ENCODE measurements at regions of chr9 and their contacts with region 1.

Region 1: GRCh38 chr9:15422372-15423230 is at the start of gene SNAPC3:
- DNase-seq: peak; percentile 94
- H3K4me3 Mint-ChIP-seq: peak within 1 kb of the TSS; percentile 96
- H3K27ac Mint-ChIP-seq: peak within 1 kb of the TSS; percentile 92
- H3K4me1 Mint-ChIP-seq: peaks cover 50% of the 10 kb centered on the region
- H3K27me3 Mint-ChIP-seq: peaks cover 3% of the 10 kb centered on the region
- total RNA-seq, gene SNAPC3: 27.1 and 30.5 TPM in 2 replicates

Region 2: GRCh38 chr9:14993061-14993800 is 429.4 kb before region 1 on chr9:
- intact Hi-C with region 1: loop called (anchors 10 kb)
- DNase-seq: peak; percentile 32
- H3K4me3 Mint-ChIP-seq: peak overlapping the region; percentile 73
- H3K27ac Mint-ChIP-seq: peak overlapping the region; percentile 41
- H3K4me1 Mint-ChIP-seq: peaks cover 39% of the 10 kb centered on the region
- H3K27me3 Mint-ChIP-seq: peaks cover 2% of the 10 kb centered on the region

Region 3: GRCh38 chr9:15211160-15211814 is 211.3 kb before region 1 on chr9:
- intact Hi-C with region 1: loop called (anchors 1 kb)
- DNase-seq: peak; percentile 47
- H3K4me3 Mint-ChIP-seq: no peak overlapping the region
- H3K27ac Mint-ChIP-seq: no peak overlapping the region
- H3K4me1 Mint-ChIP-seq: peaks cover 39% of the 10 kb centered on the region
- H3K27me3 Mint-ChIP-seq: no peaks in the 10 kb centered on the region

Region 4: DNA sequence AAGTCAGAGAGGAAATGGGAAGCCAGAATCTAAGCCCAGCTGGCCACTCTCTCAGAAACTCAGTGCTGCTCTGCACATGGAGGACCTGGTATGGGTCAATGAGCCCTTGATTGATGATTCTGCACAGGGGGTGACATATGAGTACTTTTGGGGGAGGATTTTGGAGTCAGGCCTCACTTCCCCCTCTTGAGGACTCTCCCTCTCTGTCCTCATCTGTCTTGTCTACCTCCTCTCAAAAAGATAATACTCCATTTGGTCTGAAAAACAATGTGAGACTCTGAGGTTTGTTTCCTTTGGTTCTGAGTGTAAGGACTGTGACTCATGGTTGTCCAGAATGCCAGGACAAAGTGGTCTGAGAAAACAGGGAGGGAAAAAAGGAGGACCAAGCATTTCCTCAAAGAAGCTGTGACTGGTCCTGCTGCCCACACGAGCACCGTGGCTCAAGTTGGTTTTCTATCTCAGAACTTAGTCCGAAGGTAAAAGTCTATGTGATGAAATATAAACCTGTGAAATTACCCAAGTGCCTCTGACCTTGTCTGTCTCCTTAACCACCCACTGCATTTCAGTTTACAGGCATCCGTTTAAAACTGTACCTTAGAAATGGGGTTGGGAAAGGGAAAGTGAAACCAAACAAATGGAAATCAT is 126.7 kb before region 1 on chr9:
- intact Hi-C with region 1: loop called (anchors 1 kb)
- DNase-seq: no peak
- H3K4me3 Mint-ChIP-seq: peak overlapping the region; percentile 79
- H3K27ac Mint-ChIP-seq: peak overlapping the region; percentile 97
- H3K4me1 Mint-ChIP-seq: peaks cover 84% of the 10 kb centered on the region
- H3K27me3 Mint-ChIP-seq: no peaks in the 10 kb centered on the region

Region 5: DNA sequence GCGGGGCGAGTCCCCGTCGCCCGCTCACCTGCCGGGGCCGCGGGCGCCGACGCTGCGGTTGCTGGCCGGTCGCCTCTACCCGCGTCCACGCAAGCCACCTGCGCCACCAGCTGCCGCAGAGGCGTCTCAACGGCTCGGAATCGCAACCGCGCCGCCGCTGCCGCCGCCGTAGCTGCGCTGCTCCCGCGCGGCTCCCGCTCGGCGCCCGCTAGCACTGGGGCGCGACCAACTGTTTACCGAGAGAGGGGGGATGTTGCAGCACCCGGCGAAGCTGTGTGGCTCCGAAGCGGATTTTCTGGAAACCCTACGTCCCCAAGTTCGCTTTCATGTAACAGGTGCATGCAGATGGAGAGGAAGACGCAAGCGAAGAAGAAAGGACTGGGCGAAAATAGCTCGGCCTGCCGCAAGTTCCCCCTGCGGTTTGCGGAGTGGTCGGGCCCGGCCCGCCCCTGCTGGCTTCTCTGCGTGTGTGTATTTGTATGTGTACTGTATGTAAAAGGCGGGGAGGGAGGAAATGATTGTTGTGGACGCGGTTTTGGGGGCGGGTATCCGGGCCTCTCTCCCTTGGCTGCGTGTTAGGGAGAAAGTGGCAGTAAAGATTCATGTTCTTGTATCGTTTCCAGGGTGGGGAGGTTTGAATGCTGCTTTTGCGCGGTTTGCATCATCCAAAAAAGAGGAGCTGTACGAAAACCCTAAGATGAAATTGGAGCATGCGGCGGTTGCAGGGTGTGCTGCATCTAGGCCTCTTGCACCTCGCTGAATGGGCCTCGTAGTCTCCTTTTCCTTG is 88.4 kb after region 1 on chr9 and contains the start of gene PSIP1:
- intact Hi-C with region 1: loop called (anchors 1 kb)
- DNase-seq: peak; percentile 84
- H3K4me3 Mint-ChIP-seq: peak within 1 kb of the TSS; percentile 96
- H3K27ac Mint-ChIP-seq: peak within 1 kb of the TSS; percentile 100
- H3K4me1 Mint-ChIP-seq: peaks cover 52% of the 10 kb centered on the region
- H3K27me3 Mint-ChIP-seq: peaks cover 4% of the 10 kb centered on the region
- total RNA-seq, gene PSIP1: 90.6 and 95.3 TPM in 2 replicates

Region 6: GRCh38 chr9:15606643-15607472 is 184.3 kb after region 1 on chr9:
- intact Hi-C with region 1: loop called (anchors 1 kb)
- DNase-seq: no peak
- H3K4me3 Mint-ChIP-seq: no peak overlapping the region
- H3K27ac Mint-ChIP-seq: no peak overlapping the region
- H3K4me1 Mint-ChIP-seq: peaks cover 7% of the 10 kb centered on the region
- H3K27me3 Mint-ChIP-seq: no peaks in the 10 kb centered on the region

Region 7: GRCh38 chr9:15635752-15636151 is 213.2 kb after region 1 on chr9:
- intact Hi-C with region 1: no loop called
- DNase-seq: no peak
- H3K4me3 Mint-ChIP-seq: no peak overlapping the region
- H3K27ac Mint-ChIP-seq: no peak overlapping the region
- H3K4me1 Mint-ChIP-seq: no peaks in the 10 kb centered on the region
- H3K27me3 Mint-ChIP-seq: no peaks in the 10 kb centered on the region

Region 8: GRCh38 chr9:16289639-16290038 is 867.0 kb after region 1 on chr9:
- intact Hi-C with region 1: no loop called
- DNase-seq: no peak
- H3K4me3 Mint-ChIP-seq: no peak overlapping the region
- H3K27ac Mint-ChIP-seq: no peak overlapping the region
- H3K4me1 Mint-ChIP-seq: no peaks in the 10 kb centered on the region
- H3K27me3 Mint-ChIP-seq: no peaks in the 10 kb centered on the region

Measured in activated T-helper 1 cell treated with anti-CD3 and anti-CD28 coated beads, Interleukin-12 subunit alpha, Interleukin-12 subunit beta, Interleukin-2, Interleukin-4 antibody, amounts not matched to agents 30 ng/mL and 10 ng/mL and 1 ng/mL, durations not matched to agents 14 hours and 24 hours and 36 hours (primary cell).